Head of caudate nucleus (tissue), 42 donors: ENCODE measurements at regions of chr15 and their contacts with region 1.

Region 1: DNA sequence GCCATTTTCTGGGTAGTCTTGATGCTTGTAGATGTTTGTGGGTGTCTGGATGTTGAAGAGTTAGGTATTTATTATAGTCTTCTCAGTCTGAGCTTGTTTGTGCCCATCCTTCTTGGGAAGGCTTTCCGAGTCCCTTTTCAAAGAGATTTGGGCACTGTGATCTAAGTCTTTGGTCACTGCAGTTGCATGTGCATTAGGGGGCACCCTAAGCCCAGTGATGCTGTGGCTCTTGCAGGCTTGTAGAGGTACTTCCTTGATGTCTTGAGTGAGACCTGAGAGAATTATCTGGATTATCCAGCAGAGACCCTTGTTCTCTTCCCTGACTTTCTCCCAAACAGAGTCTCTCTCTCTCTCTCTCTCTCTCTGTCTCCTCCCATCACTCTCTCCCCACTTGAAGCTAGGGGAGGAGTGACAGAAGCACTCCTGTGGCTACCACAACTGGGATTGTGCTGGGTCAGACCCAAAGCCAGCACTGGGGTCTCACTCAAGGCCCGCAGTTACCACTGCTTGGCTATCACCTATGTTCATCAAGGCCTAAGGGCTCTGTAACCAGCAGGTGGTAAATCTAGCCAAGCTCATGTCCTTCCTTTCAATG is 68.5 kb downstream of the TMCO5A start:
- DNase-seq: peak; percentile 33 to 85 (median 68)

Region 2: GRCh38 chr15:38242055-38242454 is 239.1 kb after region 1 on chr15:
- intact Hi-C with region 1: loop called (anchors 10 kb)
- DNase-seq: no peak

Region 3: DNA sequence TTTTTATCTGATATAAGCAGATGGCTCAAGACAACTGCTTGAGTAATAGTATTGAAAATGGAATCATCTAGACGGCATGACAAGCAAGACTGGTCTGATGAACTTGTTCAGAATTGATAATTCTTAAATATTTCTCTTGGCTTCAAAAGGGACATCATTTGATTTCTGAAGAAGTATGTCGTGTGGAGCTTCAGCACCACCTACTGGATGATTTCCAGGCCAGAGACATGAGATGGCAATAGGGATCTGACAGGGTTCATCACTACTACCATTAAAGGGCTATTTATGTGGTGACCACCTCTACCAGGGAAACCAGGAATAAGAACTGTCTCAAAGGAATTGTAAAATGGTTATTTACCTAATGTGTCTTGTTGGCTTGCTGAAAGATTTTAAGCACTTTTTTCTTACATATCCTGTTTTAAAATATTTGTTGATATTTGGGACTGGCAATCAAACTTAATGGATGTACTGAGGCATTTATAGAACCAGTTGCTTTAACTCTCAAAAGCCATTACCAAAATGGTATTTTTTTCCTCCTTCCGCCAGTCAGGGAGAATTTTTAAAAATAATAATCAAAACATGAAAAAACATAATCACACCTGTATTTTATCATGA is 351.4 kb after region 1 on chr15:
- intact Hi-C with region 1: loop called (anchors 5 kb)
- DNase-seq: peak in 41 of 42 donors; percentile 16 to 91 (median 74)